ENCODE measurements at regions of chr1 and their contacts with region 1.

Region 1: DNA sequence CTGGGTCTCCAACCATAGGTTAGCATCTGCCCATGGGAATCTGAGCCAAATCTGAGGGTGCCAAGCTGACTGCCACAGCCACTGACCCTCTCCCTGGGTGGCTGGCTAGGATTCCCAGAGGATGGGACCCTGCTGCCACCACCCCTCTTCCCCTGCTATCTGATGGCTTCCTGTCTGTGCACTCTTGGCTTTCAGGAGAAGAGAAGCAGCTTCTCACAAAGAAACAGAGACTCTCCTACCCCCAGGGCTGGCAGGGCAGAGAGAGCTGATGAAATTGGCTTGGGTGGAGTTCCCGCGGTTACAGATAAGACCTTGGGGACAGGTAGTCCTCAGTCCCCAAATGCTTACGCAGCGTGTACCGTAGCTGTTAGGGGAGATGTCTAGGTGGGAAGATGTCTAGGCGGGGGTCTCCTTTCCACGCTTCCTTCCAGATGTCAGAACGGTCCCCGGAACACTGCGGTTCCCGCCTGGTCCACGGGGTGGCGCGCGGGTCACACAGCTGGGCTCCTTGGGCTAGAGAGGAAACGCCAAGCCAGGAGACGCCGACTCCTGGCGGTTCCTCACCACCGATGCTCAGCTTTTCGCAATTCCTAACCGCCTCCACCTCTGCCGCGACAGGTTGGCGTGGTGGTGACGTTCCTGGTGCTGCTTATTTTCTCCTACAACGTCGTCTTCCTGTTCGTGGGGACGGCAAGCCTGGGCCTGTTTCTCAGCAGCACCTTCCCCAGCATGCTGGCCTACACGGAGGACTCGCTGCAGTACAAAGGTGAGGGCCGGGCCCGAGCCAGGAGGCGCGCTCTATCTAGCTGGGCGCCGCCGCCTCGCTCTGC is 40.1 kb downstream of the ELK4 start:
- DNase-seq: peak; percentile 91
- ATAC-seq: peak; percentile 90
- H3K4me3 Mint-ChIP-seq: peak overlapping the region; percentile 81
- H3K27ac Mint-ChIP-seq: peak overlapping the region; percentile 95
- H3K4me1 Mint-ChIP-seq: peaks cover 42% of the 10 kb centered on the region
- H3K27me3 Mint-ChIP-seq: peaks cover 3% of the 10 kb centered on the region

Region 2: GRCh38 chr1:205543411-205544301 is 48.1 kb before region 1 on chr1:
- CTCF ChIA-PET with region 1: interaction called, 12 read pairs
- POLR2A ChIA-PET with region 1: no interaction called
- DNase-seq: peak; percentile 31
- ATAC-seq: peak; percentile 30
- H3K4me3 Mint-ChIP-seq: no peak overlapping the region
- H3K27ac Mint-ChIP-seq: no peak overlapping the region
- H3K4me1 Mint-ChIP-seq: peaks cover 10% of the 10 kb centered on the region
- H3K27me3 Mint-ChIP-seq: peaks cover 39% of the 10 kb centered on the region

Region 3: DNA sequence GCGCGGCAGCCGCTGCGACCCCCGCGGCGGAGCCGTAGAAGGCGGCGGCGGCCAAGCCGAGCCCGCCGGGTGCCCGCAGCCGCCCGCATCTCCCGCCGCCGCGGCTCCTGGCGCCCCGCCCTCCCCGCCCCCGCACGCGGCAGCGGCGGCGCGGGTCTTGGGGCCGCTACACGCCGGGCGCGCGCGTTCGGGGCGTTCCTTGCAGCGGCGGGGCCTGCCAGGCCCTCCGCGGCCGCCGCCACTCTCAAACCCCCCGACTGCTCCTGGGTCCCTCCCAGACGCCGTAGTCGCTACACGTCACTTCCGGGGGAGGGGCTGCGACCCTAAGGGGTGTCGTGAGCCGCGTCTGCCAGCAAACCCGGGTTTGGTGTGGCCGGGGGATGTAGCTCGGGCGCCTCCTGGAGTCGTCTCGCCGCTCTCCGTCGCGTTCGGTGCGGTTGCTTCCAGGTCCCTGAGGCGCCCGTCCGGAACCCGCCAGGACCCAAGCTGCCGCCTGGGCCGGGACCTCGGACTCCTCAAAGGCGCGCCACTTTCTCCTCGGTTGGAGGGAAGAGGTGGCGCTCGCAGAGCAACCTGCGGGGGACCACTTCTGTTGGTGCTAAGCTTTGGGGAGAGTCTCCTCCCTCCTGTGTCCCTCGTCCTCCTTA is 40.1 kb after region 1 on chr1 and contains the start of gene ELK4:
- CTCF ChIA-PET with region 1: interaction called, 364 read pairs
- POLR2A ChIA-PET with region 1: interaction called, 198 read pairs
- DNase-seq: peak; percentile 99
- ATAC-seq: peak; percentile 83
- H3K4me3 Mint-ChIP-seq: peak within 1 kb of the TSS; percentile 90
- H3K27ac Mint-ChIP-seq: peak within 1 kb of the TSS; percentile 98
- H3K4me1 Mint-ChIP-seq: peaks cover 42% of the 10 kb centered on the region
- H3K27me3 Mint-ChIP-seq: peaks cover 4% of the 10 kb centered on the region
- total RNA-seq, gene ELK4: 95.2 to 97.5 TPM

Region 4: DNA sequence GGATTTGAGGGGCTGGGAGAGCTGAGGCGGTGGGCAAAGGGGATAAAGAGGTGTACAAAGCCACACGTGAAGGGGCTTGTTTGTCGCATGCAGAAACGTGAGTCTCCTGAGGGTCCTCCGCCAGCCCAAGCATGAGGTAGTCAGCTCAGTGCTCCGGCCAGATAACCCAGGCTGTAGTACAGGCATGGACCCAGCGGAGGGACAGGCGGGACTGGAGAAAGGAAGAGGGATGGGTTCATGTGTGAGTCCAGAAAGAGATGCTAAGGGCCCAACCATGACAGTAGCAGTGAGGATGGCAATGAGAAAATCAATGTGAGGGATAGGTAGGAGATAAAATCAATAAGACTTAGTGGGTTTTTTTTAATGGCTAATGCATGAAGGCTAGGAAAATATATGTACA is 53.8 kb after region 1 on chr1:
- CTCF ChIA-PET with region 1: interaction called, 19 read pairs
- POLR2A ChIA-PET with region 1: interaction called, 3 read pairs
- DNase-seq: no peak
- ATAC-seq: no peak
- H3K4me3 Mint-ChIP-seq: no peak overlapping the region
- H3K27ac Mint-ChIP-seq: no peak overlapping the region
- H3K4me1 Mint-ChIP-seq: no peaks in the 10 kb centered on the region
- H3K27me3 Mint-ChIP-seq: peaks cover 7% of the 10 kb centered on the region

Measured in activated CD8-positive, alpha-beta T cell treated with anti-CD3 and anti-CD28 coated beads, Interleukin-2, amount 10 ng/mL, durations not matched to agents 7 days and 5 days (primary cell).